ENCODE measurements at regions of chr12 and their contacts with region 1.

Region 1: DNA sequence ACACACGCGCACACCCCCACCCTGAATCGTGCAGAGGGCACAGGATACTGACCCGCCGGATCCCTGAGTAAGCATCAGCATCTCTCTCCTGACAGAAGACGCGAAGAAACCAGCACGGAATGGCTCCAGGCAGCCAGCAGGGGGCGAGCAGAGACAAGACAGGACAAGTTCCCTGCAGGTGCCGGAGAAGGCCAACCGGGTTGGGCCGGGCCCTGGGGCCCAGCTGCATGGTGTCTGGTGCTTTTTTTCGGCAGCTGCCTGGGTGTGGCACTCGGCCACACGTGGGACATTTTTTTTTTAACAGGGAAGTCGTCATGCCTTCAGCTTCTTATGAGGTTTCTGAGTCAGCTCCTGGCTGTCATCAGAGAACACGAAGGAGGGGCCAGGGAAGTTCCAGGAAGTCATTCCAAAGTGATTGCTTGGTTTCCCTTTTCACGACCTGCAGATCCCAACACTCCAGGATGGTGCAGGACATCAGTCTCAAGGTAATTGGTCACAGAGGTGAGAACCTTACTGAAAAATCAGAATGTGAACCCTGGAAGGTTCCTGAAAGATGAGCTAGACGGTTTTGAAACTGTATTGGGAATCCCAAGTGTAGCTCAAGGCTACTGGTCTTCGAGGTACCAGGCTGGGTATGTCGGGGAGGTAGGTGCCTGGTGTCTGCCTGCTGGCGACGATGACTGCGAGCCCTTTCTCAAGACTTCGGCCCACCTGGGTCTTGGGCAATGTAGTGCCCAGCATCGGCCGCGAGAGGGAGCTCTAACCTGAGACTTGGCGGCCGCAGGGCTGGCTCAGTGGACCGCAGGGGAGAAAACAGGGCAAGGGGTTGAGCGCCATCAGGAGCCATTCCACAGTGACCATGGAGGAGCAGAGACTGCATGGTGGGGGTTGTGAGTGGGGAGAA is 190.8 kb upstream of the PRMT8 start:
- DNase-seq: peak; percentile 99
- H3K4me3 ChIP-seq: peak overlapping the region in 2 of 3 experiments; percentile 9 to 38
- H3K27ac ChIP-seq: peak overlapping the region; percentile 94
- H3K4me1 ChIP-seq: peaks cover 46% of the 10 kb centered on the region
- H3K27me3 ChIP-seq: no peaks in the 10 kb centered on the region
- CTCF ChIP-seq: peak; percentile 93 to 99

Region 2: GRCh38 chr12:3135522-3136461 is 164.4 kb before region 1 on chr12:
- CTCF ChIA-PET with region 1: no interaction called
- dilution Hi-C with region 1: no loop called
- in situ Hi-C with region 1: no loop called
- intact Hi-C with region 1: loop called (anchors 1 kb)
- DNase-seq: peak; percentile 51
- H3K4me3 ChIP-seq: no peak overlapping the region
- H3K27ac ChIP-seq: no peak overlapping the region
- H3K4me1 ChIP-seq: peaks cover 2% of the 10 kb centered on the region
- H3K27me3 ChIP-seq: no peaks in the 10 kb centered on the region
- CTCF ChIP-seq: peak; percentile 66 to 79

Region 3: GRCh38 chr12:3342056-3342455 is 41.9 kb after region 1 on chr12:
- CTCF ChIA-PET with region 1: no interaction called
- dilution Hi-C with region 1: no loop called
- in situ Hi-C with region 1: no loop called
- intact Hi-C with region 1: no loop called
- DNase-seq: no peak
- H3K4me3 ChIP-seq: no peak overlapping the region
- H3K27ac ChIP-seq: no peak overlapping the region
- H3K4me1 ChIP-seq: peaks cover 25% of the 10 kb centered on the region
- H3K27me3 ChIP-seq: no peaks in the 10 kb centered on the region
- CTCF ChIP-seq: peak; percentile 22 to 39

Region 4: DNA sequence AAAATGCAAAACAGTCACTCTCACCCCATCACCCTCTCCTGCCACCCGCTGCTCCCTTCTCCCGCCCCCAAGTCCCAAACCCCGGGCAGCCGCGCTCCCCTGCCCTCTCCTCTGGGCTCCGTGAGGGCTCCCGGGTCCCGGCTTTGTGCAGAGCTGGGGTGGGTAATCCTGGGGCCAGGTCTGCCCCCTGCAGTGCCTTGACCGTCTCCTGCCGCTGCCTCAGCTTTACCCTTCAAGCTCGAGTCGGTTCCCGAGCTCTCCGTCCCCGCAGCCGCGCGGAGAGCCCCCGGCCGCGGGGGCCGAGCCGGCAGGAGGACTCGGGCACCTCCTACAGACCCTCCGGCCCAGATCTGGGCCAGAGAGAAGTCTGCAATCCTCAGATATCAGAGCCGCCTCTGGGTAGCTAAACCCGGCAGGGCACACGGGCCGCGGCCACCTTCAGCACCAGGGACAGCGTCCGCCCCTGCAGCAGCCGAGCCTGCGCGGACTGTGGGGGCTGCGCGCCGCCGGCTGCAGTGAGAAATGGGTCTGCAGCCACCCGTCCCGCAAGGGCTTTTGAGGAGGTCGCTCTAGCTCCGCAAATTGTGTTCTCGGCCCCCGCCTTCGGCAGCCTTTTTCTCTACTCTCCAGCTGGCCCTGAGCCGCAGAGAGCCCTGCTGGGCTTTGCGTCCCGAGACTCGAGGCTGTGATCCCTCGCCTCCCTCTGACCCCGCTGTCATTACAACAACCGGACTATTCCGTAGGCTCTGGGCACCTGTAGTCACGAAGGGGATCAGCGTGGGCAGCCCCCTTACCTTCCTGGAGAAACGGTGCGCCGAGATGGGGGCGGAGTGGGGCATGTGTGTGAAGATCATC is 192.0 kb after region 1 on chr12:
- CTCF ChIA-PET with region 1: interaction called, 13 read pairs
- dilution Hi-C with region 1: loop called (anchors 10 kb)
- in situ Hi-C with region 1: no loop called
- intact Hi-C with region 1: loop called (anchors 1 kb)
- DNase-seq: peak; percentile 66
- H3K4me3 ChIP-seq: peak overlapping the region; percentile 64 to 85 (median 77)
- H3K27ac ChIP-seq: peak overlapping the region; percentile 95
- H3K4me1 ChIP-seq: peaks cover 40% of the 10 kb centered on the region
- H3K27me3 ChIP-seq: no peaks in the 10 kb centered on the region
- CTCF ChIP-seq: peak in 1 of 2 donors; percentile 32

Region 5: DNA sequence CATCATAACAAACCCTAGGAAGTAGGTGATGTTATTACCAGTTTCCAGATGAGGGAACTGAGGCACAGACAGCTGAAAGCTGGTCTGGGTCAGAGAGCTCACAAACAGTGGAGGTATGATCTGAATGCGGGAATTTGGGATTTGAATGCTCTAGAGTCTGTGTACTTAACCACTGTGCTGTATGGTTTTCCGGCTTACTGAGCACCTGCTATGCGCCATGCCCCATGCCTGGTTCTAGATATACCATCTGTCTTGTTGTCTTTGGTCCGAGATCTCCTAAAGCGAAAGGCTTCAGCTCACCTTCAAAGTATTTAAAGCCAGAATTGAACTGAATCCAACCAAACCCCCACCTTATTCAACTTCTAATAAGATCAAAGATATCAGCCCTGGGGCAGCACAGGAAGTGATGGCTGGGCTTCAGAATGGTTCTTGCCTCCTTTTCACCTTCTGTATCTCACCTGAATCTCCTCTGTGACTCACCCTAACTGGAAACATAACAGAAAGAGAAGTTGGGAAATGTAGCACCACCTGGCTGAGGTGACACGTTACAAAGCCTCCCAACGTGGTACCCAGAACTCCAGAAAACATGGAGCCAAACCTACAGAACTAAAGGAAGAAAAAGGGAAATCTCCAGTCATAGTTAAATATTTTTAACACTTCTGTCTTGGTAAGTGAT is 245.1 kb after region 1 on chr12:
- CTCF ChIA-PET with region 1: no interaction called
- dilution Hi-C with region 1: no loop called
- in situ Hi-C with region 1: loop called in 1 of 2 experiments (anchors 25 kb)
- intact Hi-C with region 1: loop called (anchors 1 kb)
- DNase-seq: peak; percentile 75
- H3K4me3 ChIP-seq: no peak overlapping the region
- H3K27ac ChIP-seq: no peak overlapping the region
- H3K4me1 ChIP-seq: peaks cover 8% of the 10 kb centered on the region
- H3K27me3 ChIP-seq: no peaks in the 10 kb centered on the region
- CTCF ChIP-seq: peak in 1 of 2 donors; percentile 39

Region 6: GRCh38 chr12:3680896-3681594 is 380.9 kb after region 1 on chr12:
- CTCF ChIA-PET with region 1: interaction called, 5 read pairs
- dilution Hi-C with region 1: no loop called
- in situ Hi-C with region 1: no loop called
- intact Hi-C with region 1: loop called (anchors 1 kb)
- DNase-seq: peak; percentile 14
- H3K4me3 ChIP-seq: no peak overlapping the region
- H3K27ac ChIP-seq: no peak overlapping the region
- H3K4me1 ChIP-seq: no peaks in the 10 kb centered on the region
- H3K27me3 ChIP-seq: no peaks in the 10 kb centered on the region
- CTCF ChIP-seq: peak; percentile 33 to 41

Region 7: GRCh38 chr12:3872800-3873636 is 572.8 kb after region 1 on chr12 and contains the start of gene PARP11:
- CTCF ChIA-PET with region 1: no interaction called
- dilution Hi-C with region 1: no loop called
- in situ Hi-C with region 1: no loop called
- intact Hi-C with region 1: loop called (anchors 2 kb)
- DNase-seq: peak; percentile 94
- H3K4me3 ChIP-seq: peak within 1 kb of the TSS; percentile 78 to 89 (median 79)
- H3K27ac ChIP-seq: peak within 1 kb of the TSS; percentile 82
- H3K4me1 ChIP-seq: peaks cover 12% of the 10 kb centered on the region
- H3K27me3 ChIP-seq: no peaks in the 10 kb centered on the region
- CTCF ChIP-seq: no peak
- total RNA-seq, gene PARP11: 8.5 to 10.6 TPM